Ascending aorta (tissue), 2 donors: ENCODE measurements at regions of chr9 and their contacts with region 1.

Region 1: DNA sequence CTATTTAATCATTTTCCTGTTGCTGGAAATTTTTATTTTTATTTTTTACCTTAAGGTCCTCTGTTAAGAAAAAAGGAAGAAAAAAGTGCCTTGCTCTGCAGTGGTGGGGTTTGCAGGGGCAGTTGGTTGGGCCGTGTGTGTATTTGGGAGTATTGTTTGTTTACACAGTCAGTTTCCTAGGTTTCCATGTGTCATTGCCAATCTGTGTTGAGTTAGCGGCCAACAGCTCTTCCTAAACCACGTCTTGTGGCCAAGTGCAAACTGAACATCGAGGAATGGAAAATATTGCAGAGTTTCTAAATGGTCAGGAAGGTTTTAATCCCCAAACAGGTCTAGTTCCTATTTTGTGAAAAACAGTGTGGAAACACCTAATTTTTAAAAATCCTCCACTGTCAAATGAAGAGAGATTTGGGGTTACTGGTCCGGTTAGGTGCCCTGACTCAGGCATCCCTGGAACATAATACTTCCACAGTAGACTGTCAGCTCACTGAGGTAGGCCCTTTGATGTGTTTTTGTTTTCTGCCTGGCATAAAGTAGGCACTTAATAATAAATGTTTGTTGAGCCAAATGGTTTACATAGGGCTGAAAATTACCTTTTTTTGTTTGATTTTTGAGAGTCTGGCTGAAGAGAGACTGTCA is 37.0 kb downstream of the MAMDC2 start:
- DNase-seq: peak in 1 of 2 donors; percentile 69
- H3K4me3 ChIP-seq: no peak overlapping the region
- H3K27ac ChIP-seq: peak overlapping the region; percentile 52 to 69
- H3K4me1 ChIP-seq: peaks cover 4 to 17% of the 10 kb centered on the region in 2 donors
- H3K27me3 ChIP-seq: no peaks in the 10 kb centered on the region
- CTCF ChIP-seq: no peak

Region 2: DNA sequence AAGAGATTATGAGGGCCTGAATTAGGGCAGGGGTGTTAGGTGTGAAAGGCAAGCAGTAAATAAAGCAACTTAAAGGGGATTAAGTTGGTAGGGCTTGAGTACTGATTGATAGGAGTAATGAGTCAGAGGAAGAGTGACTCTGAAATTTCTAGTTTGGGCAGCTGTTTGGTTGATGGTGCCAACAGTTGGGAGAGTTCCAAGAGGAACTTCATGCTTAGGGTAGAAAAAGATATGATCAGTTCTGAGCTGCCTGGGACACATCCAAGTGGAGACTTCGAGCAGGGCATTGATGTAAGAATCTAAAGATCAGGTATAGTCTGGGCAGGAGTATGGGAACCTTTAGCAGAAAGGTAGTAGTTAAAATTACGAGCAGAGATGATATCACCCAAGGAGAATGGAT is 26.7 kb before region 1 on chr9:
- intact Hi-C with region 1: loop called (anchors 2 kb)
- DNase-seq: peak in 1 of 2 donors; percentile 71
- H3K4me3 ChIP-seq: no peak overlapping the region
- H3K27ac ChIP-seq: peak overlapping the region; percentile 63 to 69
- H3K4me1 ChIP-seq: peaks cover 11 to 47% of the 10 kb centered on the region in 2 donors
- H3K27me3 ChIP-seq: no peaks in the 10 kb centered on the region
- CTCF ChIP-seq: no peak